ENCODE measurements at regions of chr7 and their contacts with region 1.

Region 1: GRCh38 chr7:47654672-47655298 is 72.9 kb upstream of the TNS3 start:
- DNase-seq: no peak
- H3K4me3 ChIP-seq: no peak overlapping the region
- H3K27ac ChIP-seq: no peak overlapping the region
- H3K4me1 ChIP-seq: no peaks in the 10 kb centered on the region
- H3K27me3 ChIP-seq: no peaks in the 10 kb centered on the region
- CTCF ChIP-seq: no peak

Region 2: DNA sequence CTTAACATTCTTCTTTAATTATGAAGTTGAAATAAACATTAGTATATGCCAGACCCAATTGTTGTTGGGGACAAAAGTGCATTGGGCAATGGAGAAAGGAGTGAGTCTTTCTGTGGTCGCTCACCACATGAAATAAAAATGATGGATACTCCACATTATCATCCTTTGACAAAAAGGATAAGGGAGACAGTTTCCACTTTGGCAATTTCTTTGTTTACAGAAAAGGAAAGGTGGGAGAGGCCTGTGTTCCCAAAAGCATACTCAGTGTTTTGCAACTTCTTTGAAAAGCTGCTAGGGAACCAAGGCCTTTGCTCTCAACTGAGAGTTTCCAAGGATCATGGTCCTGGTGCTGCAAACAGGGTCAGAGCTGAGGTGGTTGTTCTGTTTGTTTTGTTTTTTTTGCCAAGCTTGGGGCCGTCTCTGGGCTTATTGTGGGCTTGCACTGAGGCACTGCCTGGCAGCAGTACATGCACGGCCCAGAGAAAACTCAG is 414.8 kb before region 1 on chr7:
- CTCF ChIA-PET with region 1: no interaction called
- POLR2A ChIA-PET with region 1: no interaction called
- intact Hi-C with region 1: no loop called
- DNase-seq: no peak
- H3K4me3 ChIP-seq: no peak overlapping the region
- H3K27ac ChIP-seq: no peak overlapping the region
- H3K4me1 ChIP-seq: no peaks in the 10 kb centered on the region
- H3K27me3 ChIP-seq: peaks cover 17% of the 10 kb centered on the region
- CTCF ChIP-seq: no peak

Region 3: GRCh38 chr7:47482013-47482875 is 172.5 kb before region 1 on chr7:
- CTCF ChIA-PET with region 1: interaction called, 11 read pairs
- POLR2A ChIA-PET with region 1: no interaction called
- intact Hi-C with region 1: no loop called
- DNase-seq: no peak
- H3K4me3 ChIP-seq: no peak overlapping the region
- H3K27ac ChIP-seq: no peak overlapping the region
- H3K4me1 ChIP-seq: no peaks in the 10 kb centered on the region
- H3K27me3 ChIP-seq: no peaks in the 10 kb centered on the region
- CTCF ChIP-seq: no peak

Region 4: DNA sequence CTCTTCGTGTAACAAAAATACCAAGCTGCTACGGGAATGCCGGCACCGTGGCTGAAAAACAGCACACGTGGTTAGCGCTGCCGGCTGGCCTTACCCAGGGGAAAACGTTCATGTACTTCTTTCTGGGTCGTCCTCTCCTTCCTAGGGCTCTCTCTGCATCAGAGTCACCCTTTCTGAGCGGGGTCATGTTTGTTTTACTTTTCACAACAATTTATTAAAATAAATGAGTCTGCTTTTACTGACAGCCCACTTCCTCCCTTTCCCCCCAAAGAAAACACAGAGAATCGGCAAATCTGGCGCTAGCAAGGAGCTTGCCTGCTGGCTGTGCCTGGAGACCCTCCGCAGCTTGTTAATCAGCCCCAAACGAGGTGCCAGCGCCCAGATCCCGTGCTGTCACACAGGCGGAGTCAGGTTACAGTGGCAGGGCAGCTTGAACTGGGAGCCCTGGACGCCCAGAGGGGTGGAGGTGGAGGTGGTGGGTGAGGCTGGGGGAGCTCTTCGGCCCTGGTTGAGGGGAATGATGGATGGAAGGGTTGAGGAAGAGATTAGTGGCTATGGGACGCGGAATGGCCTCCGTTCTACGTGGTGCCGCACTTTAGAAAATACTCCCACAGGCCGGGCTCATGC is 89.3 kb after region 1 on chr7:
- CTCF ChIA-PET with region 1: no interaction called
- POLR2A ChIA-PET with region 1: no interaction called
- intact Hi-C with region 1: no loop called
- DNase-seq: no peak
- H3K4me3 ChIP-seq: no peak overlapping the region
- H3K27ac ChIP-seq: no peak overlapping the region
- H3K4me1 ChIP-seq: no peaks in the 10 kb centered on the region
- H3K27me3 ChIP-seq: no peaks in the 10 kb centered on the region
- CTCF ChIP-seq: no peak

Region 5: DNA sequence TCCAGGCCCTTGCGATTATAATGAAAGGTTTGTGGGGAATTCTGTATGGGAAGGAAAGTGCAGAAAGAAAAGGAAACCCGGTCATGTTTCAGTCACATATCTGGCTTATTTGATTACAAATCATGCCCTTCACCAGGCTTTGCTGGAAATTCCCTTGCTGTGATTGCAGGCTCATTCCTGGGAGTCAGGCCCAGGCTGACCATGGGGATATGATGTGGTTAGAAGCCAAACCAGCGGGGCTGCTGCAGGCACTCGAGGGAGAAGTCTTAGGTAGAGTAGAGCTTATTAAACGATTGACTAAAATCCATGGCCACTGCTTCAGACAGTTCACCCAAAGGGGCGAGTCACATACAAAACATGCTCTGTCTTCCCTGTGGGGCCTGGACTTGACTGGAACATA is 277.2 kb after region 1 on chr7:
- CTCF ChIA-PET with region 1: no interaction called
- POLR2A ChIA-PET with region 1: no interaction called
- intact Hi-C with region 1: no loop called
- DNase-seq: no peak
- H3K4me3 ChIP-seq: no peak overlapping the region
- H3K27ac ChIP-seq: no peak overlapping the region
- H3K4me1 ChIP-seq: no peaks in the 10 kb centered on the region
- H3K27me3 ChIP-seq: no peaks in the 10 kb centered on the region
- CTCF ChIP-seq: no peak

Region 6: DNA sequence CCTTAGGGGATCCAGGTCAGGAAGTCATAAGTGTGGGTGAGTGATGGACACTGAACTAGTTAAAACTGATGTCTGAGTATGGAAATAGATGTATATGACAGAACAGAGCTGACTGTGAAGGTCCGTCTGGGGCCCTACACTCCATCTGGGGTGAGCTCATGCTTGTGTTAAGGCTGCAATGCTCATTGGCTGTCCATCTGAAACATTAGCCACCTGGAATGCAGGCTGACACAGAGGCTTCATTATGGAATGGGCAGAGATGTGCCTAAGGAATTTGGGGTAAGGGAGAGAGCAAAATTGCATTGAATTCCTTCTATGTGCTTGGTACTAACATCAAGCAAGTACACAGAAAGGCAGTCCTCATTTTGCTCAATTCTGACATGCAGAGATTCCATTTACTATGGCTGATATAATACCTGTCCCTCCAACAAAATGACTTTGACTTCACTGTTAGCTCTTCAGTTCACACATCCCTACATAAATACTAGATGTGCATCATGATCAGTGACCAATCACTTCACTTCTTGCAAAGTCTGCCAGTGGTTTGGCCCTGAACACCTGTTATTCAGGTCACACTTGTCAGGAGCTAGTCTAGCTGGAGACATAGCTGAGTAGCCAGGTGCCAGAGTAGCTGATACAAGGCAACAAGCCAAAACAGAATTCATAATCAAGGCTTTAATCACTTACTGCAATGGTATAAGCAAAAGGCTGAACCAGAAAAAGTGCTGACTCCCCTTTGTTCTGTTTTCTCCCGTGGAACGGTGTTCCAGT is 1989.8 kb after region 1 on chr7:
- CTCF ChIA-PET with region 1: no interaction called
- POLR2A ChIA-PET with region 1: no interaction called
- intact Hi-C with region 1: no loop called
- DNase-seq: no peak
- H3K4me3 ChIP-seq: no peak overlapping the region
- H3K27ac ChIP-seq: no peak overlapping the region
- H3K4me1 ChIP-seq: no peaks in the 10 kb centered on the region
- H3K27me3 ChIP-seq: no peaks in the 10 kb centered on the region
- CTCF ChIP-seq: no peak

Measured in A673 (cell line).